HAP-1 (cell line): ENCODE measurements at regions of chr4 and their contacts with region 1.

Region 1: GRCh38 chr4:150217192-150217591 is 138.9 kb downstream of the DCLK2 start:
- DNase-seq: peak; percentile 40 to 64
- H3K4me3 ChIP-seq: no peak overlapping the region
- H3K4me1 ChIP-seq: peaks cover 10% of the 10 kb centered on the region
- H3K27me3 ChIP-seq: no peaks in the 10 kb centered on the region

Region 2: GRCh38 chr4:149999485-150000074 is 217.6 kb before region 1 on chr4:
- in situ Hi-C with region 1: loop called (anchors 10 kb)
- DNase-seq: peak; percentile 62 to 79
- H3K4me3 ChIP-seq: no peak overlapping the region
- H3K4me1 ChIP-seq: no peaks in the 10 kb centered on the region
- H3K27me3 ChIP-seq: no peaks in the 10 kb centered on the region